ENCODE measurements at regions of chr11 and their contacts with region 1.

Region 1: GRCh38 chr11:133228471-133229329 is 303.6 kb downstream of the OPCML start:
- DNase-seq: no peak
- H3K4me3 ChIP-seq: no peak overlapping the region
- H3K27ac ChIP-seq: no peak overlapping the region
- H3K4me1 ChIP-seq: no peaks in the 10 kb centered on the region
- H3K27me3 ChIP-seq: no peaks in the 10 kb centered on the region
- CTCF ChIP-seq: no peak
- EP300 ChIP-seq: no peak
- POLR2A ChIP-seq: no peak

Region 2: DNA sequence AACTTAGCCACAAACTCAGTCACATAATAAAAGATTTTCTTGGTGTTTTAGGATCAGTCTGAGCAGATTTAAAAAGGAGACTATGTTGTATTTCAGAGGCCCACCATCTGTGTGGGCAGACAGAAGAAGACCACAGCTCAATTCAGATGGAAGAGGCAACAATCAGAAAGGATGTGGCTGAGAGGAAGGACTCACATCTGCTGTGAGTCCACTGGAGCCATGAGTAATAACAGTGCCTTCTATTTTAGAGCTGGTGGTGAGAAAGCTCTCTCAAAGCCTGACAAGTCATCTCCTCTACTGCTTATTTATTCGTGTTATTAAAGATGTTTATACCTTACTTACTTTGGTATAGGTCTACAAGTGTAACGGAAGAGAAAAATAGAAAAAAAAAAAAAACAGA is 53.6 kb before region 1 on chr11:
- intact Hi-C with region 1: no loop called
- DNase-seq: no peak
- H3K4me3 ChIP-seq: no peak overlapping the region
- H3K27ac ChIP-seq: no peak overlapping the region
- H3K4me1 ChIP-seq: no peaks in the 10 kb centered on the region
- H3K27me3 ChIP-seq: no peaks in the 10 kb centered on the region
- CTCF ChIP-seq: no peak
- EP300 ChIP-seq: no peak
- POLR2A ChIP-seq: no peak

Region 3: GRCh38 chr11:133277886-133278285 is 49.2 kb after region 1 on chr11:
- intact Hi-C with region 1: loop called in 1 of 4 experiments (anchors 1 kb)
- DNase-seq: no peak
- H3K4me3 ChIP-seq: no peak overlapping the region
- H3K27ac ChIP-seq: no peak overlapping the region
- H3K4me1 ChIP-seq: no peaks in the 10 kb centered on the region
- H3K27me3 ChIP-seq: no peaks in the 10 kb centered on the region
- CTCF ChIP-seq: no peak
- EP300 ChIP-seq: no peak
- POLR2A ChIP-seq: no peak